ENCODE measurements at regions of chr3 and their contacts with region 1.

Region 1: GRCh38 chr3:32467333-32468070 is 35.1 kb downstream of the CMTM6 start:
- DNase-seq: peak; percentile 73
- H3K4me3 Mint-ChIP-seq: peak overlapping the region; percentile 27
- H3K27ac Mint-ChIP-seq: no peak overlapping the region
- H3K4me1 Mint-ChIP-seq: peaks cover 59% of the 10 kb centered on the region
- H3K27me3 Mint-ChIP-seq: no peaks in the 10 kb centered on the region

Region 2: DNA sequence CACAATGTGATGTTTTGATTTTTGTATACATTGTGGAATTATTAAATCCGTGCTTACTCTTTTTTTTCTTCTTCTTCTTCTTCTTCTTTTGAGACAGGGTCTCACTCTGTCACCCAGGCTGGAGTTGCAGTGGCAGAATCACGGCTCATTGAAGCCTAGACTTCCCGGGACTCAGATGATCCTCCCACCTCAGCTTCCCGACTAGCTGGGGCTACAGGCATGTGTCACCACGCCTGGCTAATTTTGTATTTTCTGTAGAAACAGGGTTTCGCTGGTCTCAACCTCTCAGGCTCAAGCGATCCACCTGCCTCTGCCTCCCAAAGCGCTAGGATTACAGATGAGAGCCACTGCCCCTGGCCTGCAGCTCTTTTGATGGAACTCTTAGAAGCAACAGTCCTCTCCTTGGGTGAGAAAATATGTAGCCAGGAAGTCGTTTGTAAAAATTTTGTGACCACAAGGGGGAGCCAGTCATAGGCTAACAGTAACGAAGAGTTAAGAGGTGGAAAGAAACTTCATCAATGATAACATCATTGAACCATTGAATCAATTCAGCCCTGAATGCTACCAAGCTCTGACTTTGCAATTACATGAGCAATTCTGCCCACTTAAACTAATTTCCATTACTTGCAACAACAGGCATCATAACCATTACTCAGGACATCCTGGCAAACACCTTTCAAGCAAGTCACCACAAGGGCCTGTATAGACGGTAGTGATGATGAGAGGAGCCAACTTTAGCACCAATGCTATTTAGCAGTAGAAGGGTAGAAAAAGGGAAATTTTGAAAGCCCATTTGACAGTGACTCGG is 92.5 kb before region 1 on chr3:
- CTCF ChIA-PET with region 1: interaction called, 123 read pairs
- DNase-seq: peak; percentile 77
- H3K4me3 Mint-ChIP-seq: no peak overlapping the region
- H3K27ac Mint-ChIP-seq: peak overlapping the region; percentile 34
- H3K4me1 Mint-ChIP-seq: peaks cover 35% of the 10 kb centered on the region
- H3K27me3 Mint-ChIP-seq: no peaks in the 10 kb centered on the region

Region 3: GRCh38 chr3:32401556-32402081 is 65.9 kb before region 1 on chr3:
- CTCF ChIA-PET with region 1: interaction called, 24 read pairs
- DNase-seq: peak; percentile 83
- H3K4me3 Mint-ChIP-seq: peak overlapping the region; percentile 79
- H3K27ac Mint-ChIP-seq: peak overlapping the region; percentile 97
- H3K4me1 Mint-ChIP-seq: peaks cover 79% of the 10 kb centered on the region
- H3K27me3 Mint-ChIP-seq: no peaks in the 10 kb centered on the region

Region 4: DNA sequence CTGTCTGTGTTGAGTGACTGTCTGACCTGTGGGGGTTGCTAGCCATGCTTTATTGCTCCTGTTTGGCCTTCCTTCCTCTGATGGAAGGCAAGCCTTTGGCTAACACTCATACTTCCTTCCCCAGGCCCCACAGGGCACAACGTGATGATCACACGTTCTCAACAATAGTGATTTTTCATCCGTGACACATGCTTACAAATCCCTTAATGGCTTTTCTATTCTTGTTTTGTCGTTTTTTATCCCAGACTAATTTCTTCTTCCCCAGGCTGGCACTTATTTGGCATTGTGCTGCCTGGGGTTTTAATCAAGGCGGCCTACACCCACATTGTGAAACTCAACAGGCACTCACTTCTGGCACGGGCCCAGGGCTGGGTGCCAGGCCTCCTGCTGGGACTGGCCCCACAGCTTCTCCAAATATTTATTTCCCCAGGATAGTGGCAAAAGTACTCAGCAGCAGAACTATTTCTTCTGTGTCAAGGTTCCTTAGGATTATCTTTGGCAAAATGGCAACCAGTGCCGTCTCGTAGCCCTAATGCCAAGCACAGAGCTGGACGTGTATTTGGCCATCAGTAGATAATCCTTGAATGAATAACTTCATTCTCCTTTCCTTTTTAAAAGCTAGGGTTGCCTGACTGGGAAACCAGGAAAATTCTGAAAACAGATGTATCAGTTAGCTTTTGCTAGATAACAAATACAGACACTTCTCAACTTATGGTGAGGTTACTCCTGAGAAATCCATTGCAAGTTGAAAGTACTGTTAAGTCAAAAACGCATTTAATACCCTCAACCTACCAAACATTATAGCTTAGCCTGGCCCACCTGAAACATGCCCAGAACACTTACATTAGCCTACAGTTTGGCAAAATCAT is 45.3 kb before region 1 on chr3:
- CTCF ChIA-PET with region 1: interaction called, 24 read pairs
- DNase-seq: no peak
- H3K4me3 Mint-ChIP-seq: no peak overlapping the region
- H3K27ac Mint-ChIP-seq: peak overlapping the region; percentile 53
- H3K4me1 Mint-ChIP-seq: peaks cover 94% of the 10 kb centered on the region
- H3K27me3 Mint-ChIP-seq: no peaks in the 10 kb centered on the region

Region 5: DNA sequence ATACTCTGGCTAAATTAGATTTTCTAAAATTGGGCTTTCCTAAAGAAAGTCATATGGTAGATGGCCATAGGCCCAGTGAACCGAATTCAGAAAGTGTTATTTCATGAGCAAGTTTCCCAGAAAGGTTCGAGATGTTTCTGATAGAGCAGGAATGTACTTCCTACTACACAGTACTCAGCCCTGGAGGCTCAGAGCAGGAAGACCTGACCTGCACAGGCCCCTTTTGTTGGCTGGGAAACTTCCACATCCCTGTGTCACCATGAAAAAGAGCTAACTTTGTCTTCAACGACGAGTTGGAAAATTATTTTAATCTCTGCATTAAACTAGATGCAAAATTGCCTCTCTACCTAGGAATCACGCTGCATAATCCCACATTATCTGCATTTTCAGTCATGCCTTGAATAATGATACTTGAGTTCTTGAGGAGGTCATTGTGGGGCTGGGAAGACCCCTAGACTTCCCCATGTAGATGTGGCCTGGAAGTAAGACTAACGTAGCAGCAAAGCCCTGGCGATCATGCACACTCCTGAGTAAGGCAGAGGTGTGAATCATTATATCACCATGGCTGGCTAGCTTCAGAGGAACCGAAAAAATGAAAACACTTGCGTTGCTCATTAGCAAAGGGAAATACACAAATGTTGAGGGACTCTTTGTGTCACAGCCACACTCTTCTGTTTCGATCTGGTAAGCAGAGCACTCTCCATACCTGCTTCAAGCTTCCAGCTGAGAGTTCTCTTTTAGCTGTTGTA is 28.7 kb before region 1 on chr3:
- CTCF ChIA-PET with region 1: interaction called, 11 read pairs
- DNase-seq: no peak
- H3K4me3 Mint-ChIP-seq: no peak overlapping the region
- H3K27ac Mint-ChIP-seq: peak overlapping the region; percentile 84
- H3K4me1 Mint-ChIP-seq: peaks cover 78% of the 10 kb centered on the region
- H3K27me3 Mint-ChIP-seq: no peaks in the 10 kb centered on the region

Region 6: DNA sequence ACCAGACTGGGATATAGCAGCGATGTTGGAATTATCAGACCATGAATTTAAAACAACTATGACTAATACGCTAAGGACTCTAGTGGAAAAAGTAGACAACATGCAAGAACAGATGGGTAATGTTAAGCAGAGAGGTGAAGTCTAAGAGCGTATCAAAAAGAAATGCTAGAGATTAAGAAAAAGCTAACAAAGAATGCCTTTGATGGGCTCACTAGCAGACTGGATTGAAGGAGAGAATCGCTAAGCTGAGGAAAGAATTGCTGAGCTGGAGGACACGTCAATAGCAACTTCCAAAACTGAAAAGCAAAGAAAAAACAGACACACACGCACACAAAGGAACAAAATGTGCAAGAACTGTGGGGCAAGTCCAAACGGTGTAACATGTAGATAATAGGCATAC is 55.2 kb after region 1 on chr3:
- CTCF ChIA-PET with region 1: no interaction called
- DNase-seq: no peak
- H3K4me3 Mint-ChIP-seq: no peak overlapping the region
- H3K27ac Mint-ChIP-seq: no peak overlapping the region
- H3K4me1 Mint-ChIP-seq: peaks cover 2% of the 10 kb centered on the region
- H3K27me3 Mint-ChIP-seq: no peaks in the 10 kb centered on the region

Region 7: GRCh38 chr3:32630266-32630665 is 162.8 kb after region 1 on chr3:
- CTCF ChIA-PET with region 1: no interaction called
- DNase-seq: no peak
- H3K4me3 Mint-ChIP-seq: no peak overlapping the region
- H3K27ac Mint-ChIP-seq: no peak overlapping the region
- H3K4me1 Mint-ChIP-seq: no peaks in the 10 kb centered on the region
- H3K27me3 Mint-ChIP-seq: peaks cover 17% of the 10 kb centered on the region

Region 8: GRCh38 chr3:32675164-32675563 is 207.7 kb after region 1 on chr3:
- CTCF ChIA-PET with region 1: no interaction called
- DNase-seq: no peak
- H3K4me3 Mint-ChIP-seq: no peak overlapping the region
- H3K27ac Mint-ChIP-seq: peak overlapping the region; percentile 42
- H3K4me1 Mint-ChIP-seq: peaks cover 8% of the 10 kb centered on the region
- H3K27me3 Mint-ChIP-seq: peaks cover 24% of the 10 kb centered on the region

Region 9: DNA sequence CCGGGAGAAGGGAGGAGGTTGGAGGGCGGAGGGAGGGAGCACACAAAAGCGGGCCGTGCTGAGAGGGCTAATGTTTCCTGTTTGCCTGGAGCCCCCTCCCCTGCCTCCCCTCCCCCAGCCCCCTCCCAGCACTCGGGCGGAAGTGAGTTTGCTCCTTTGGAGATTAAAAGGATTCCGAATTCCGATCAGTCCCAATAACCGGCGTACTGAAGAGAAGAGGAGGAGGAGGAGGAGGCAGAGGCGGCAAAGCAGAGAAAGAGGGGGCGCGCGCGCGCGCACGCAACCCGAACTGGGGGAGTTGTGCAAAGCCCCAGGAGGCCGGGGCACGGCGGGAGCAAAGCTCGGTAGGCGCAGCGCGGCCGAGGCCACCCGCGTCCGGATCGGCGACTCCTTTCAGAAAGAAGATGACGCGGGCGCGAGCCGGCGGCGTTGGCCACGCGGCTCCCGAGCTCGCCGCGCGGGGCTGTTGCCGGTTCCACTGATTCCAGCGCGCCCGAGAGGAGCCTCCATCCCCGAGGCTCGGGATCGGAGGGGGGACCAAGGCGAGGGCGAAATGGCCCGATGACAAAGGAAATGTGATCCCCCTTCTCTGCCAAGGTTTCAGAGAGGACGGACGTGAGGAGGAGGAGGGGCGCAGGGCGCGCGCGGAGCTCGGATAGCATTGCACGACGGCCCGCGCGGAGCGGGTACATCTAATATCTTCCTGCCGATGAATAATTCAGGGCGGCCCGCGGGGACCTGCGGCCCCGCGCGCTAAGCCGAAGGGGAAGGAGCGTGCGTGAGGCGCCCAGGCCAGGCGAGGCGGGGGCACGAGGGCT is 349.1 kb after region 1 on chr3:
- CTCF ChIA-PET with region 1: no interaction called
- DNase-seq: peak; percentile 35
- H3K4me3 Mint-ChIP-seq: peak overlapping the region; percentile 71
- H3K27ac Mint-ChIP-seq: no peak overlapping the region
- H3K4me1 Mint-ChIP-seq: peaks cover 32% of the 10 kb centered on the region
- H3K27me3 Mint-ChIP-seq: peaks cover 84% of the 10 kb centered on the region

Measured in activated naive CD4-positive, alpha-beta T cell treated with anti-CD3 and anti-CD28 coated beads, Interleukin-2, amount 10 ng/mL, durations not matched to agents 7 days and 5 days (primary cell).